Activated B cell treated with CpG ODN at 0.5 μM for 24 hours (primary cell): ENCODE measurements at regions of chr12 and their contacts with region 1.

Region 1: DNA sequence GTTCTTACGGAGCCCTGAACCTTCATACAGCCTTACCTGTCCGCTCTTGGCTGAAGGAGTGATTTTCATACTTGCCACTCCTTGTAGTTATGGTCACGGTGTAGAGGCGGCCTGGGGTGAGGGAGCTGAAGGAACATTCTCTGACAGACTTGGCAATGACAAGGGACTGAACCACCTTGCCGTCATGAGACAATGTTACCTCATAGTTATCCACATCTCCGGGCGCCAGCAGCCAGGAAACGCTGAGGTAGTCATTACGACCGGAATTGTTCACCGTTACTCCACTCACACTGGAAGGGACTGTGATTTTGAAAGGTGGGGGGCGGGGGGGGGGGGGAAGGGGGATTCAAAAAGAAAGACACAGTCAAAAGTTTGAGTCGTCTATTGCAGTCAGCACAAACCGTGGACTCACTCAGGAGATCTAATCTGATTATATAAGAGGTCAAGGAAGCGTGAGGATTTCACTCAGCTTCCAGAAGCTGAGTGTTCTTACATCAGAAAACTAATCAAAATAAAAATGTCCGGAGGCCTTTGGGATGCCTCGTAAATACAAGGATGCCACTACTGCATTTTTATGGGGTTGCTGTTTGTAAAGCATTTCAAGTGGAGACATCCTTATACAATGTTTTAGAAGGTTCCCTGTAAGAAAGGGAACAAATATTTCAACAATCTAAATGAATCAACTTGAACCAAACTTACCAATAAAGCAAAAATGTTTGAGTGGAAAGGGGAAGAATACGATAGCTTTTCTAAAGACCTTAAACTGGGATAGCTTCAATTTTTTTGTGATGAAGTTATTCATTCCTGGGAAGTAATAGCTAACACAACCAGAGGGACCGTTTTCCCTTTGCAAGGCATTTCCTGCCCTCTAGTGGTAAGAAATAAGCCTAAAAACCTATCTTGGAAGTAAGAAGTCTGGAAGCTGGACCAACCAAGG is 60.6 kb downstream of the PTPRB start:
- DNase-seq: no peak
- ATAC-seq: no peak
- H3K4me3 Mint-ChIP-seq: no peak overlapping the region
- H3K27ac Mint-ChIP-seq: no peak overlapping the region
- H3K4me1 Mint-ChIP-seq: no peaks in the 10 kb centered on the region
- H3K27me3 Mint-ChIP-seq: peaks cover 2% of the 10 kb centered on the region
- CTCF ChIP-seq: no peak

Region 2: GRCh38 chr12:69879041-69879960 is 697.3 kb before region 1 on chr12:
- CTCF ChIA-PET with region 1: interaction called, 45 read pairs
- POLR2A ChIA-PET with region 1: no interaction called
- intact Hi-C with region 1: loop called (anchors 1 kb)
- DNase-seq: peak; percentile 29
- ATAC-seq: peak; percentile 82
- H3K4me3 Mint-ChIP-seq: no peak overlapping the region
- H3K27ac Mint-ChIP-seq: no peak overlapping the region
- H3K4me1 Mint-ChIP-seq: peaks cover 5% of the 10 kb centered on the region
- H3K27me3 Mint-ChIP-seq: peaks cover 15% of the 10 kb centered on the region
- CTCF ChIP-seq: peak; percentile 95

Region 3: GRCh38 chr12:69885658-69886057 is 691.0 kb before region 1 on chr12:
- CTCF ChIA-PET with region 1: interaction called, 45 read pairs
- POLR2A ChIA-PET with region 1: no interaction called
- intact Hi-C with region 1: no loop called
- DNase-seq: no peak
- ATAC-seq: no peak
- H3K4me3 Mint-ChIP-seq: no peak overlapping the region
- H3K27ac Mint-ChIP-seq: no peak overlapping the region
- H3K4me1 Mint-ChIP-seq: no peaks in the 10 kb centered on the region
- H3K27me3 Mint-ChIP-seq: no peaks in the 10 kb centered on the region
- CTCF ChIP-seq: no peak

Region 4: GRCh38 chr12:69900720-69901131 is 675.9 kb before region 1 on chr12:
- CTCF ChIA-PET with region 1: interaction called, 87 read pairs
- POLR2A ChIA-PET with region 1: no interaction called
- intact Hi-C with region 1: loop called (anchors 1 kb)
- DNase-seq: no peak
- ATAC-seq: peak; percentile 40
- H3K4me3 Mint-ChIP-seq: no peak overlapping the region
- H3K27ac Mint-ChIP-seq: no peak overlapping the region
- H3K4me1 Mint-ChIP-seq: no peaks in the 10 kb centered on the region
- H3K27me3 Mint-ChIP-seq: no peaks in the 10 kb centered on the region
- CTCF ChIP-seq: peak; percentile 68

Region 5: GRCh38 chr12:70094467-70094866 is 482.1 kb before region 1 on chr12:
- CTCF ChIA-PET with region 1: no interaction called
- POLR2A ChIA-PET with region 1: no interaction called
- intact Hi-C with region 1: no loop called
- DNase-seq: no peak
- ATAC-seq: no peak
- H3K4me3 Mint-ChIP-seq: no peak overlapping the region
- H3K27ac Mint-ChIP-seq: no peak overlapping the region
- H3K4me1 Mint-ChIP-seq: no peaks in the 10 kb centered on the region
- H3K27me3 Mint-ChIP-seq: no peaks in the 10 kb centered on the region
- CTCF ChIP-seq: no peak

Region 6: DNA sequence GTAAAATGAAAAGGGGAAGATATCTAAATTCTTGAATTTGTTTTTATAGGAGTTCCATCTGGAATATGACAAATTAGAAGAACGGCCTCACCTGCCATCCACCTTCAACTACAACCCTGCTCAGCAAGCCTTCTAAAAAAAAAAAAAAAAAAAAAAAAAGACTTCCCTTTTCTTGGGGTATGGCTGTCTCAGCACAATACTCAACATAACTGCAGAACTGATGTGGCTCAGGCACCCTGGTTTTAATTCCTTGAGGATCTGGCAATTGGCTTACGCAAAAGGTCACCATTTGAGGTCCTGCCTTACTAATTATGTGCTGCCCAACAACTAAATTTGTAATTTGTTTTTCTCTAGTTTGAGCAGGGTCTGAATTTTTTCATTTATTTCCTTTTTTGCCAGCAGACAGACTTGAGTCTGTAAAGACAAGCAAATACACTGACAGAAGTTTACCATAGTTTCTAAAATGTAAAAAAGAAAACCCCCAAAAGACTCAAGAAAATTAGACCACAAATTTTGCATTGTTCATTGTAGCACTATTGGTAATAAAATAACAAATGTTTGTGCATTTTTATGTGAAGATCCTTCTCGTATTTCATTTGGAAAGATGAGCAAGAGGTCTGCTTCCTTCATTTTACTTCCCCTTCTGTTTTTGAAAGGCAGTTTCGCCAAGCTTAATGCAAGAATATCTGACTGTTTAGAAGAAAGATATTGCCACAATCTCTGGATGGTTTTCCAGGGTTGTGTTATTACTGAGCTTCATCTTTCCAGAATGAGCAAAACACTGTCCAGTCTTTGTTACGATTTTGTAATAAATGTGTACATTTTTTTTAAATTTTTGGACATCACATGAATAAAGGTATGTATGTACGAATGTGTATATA is 222.6 kb before region 1 on chr12:
- CTCF ChIA-PET with region 1: no interaction called
- POLR2A ChIA-PET with region 1: interaction called, 5 read pairs
- intact Hi-C with region 1: loop called (anchors 5 kb)
- DNase-seq: no peak
- ATAC-seq: no peak
- H3K4me3 Mint-ChIP-seq: no peak overlapping the region
- H3K27ac Mint-ChIP-seq: peak overlapping the region; percentile 41
- H3K4me1 Mint-ChIP-seq: peaks cover 9% of the 10 kb centered on the region
- H3K27me3 Mint-ChIP-seq: no peaks in the 10 kb centered on the region
- CTCF ChIP-seq: no peak

Region 7: DNA sequence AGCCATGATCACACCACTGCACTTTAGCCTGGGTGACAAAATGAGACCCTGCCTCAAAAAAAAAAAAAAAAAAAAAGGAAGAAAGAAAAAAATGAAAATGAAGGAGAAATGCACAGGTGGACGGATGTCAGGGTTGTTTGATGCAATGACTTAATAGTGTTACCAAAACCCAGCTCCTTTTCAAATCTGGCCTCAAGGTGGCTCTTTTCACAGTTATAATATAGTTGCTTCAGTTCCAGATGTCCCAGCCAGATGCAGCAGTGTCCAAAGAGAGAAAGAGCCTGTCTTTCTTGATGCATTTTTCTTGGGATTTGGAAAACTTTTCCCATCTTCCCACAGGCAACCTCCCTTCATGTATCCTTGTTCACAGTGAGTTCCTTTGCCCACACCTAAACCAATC is 174.0 kb before region 1 on chr12:
- CTCF ChIA-PET with region 1: no interaction called
- POLR2A ChIA-PET with region 1: no interaction called
- intact Hi-C with region 1: loop called (anchors 1 kb)
- DNase-seq: no peak
- ATAC-seq: no peak
- H3K4me3 Mint-ChIP-seq: no peak overlapping the region
- H3K27ac Mint-ChIP-seq: no peak overlapping the region
- H3K4me1 Mint-ChIP-seq: peaks cover 2% of the 10 kb centered on the region
- H3K27me3 Mint-ChIP-seq: no peaks in the 10 kb centered on the region
- CTCF ChIP-seq: no peak